H1 (cell line): ENCODE measurements at regions of chr1 and their contacts with region 1.

Region 1: GRCh38 chr1:7667625-7668218 is 103.4 kb upstream of the VAMP3 start:
- DNase-seq: peak; percentile 53 to 99
- H3K4me3 ChIP-seq: no peak overlapping the region
- H3K27ac ChIP-seq: no peak overlapping the region
- H3K4me1 ChIP-seq: peaks cover 0 to 23% (median 12%) of the 10 kb centered on the region in 4 experiments; a peak in 6 of 7 replicates
- H3K27me3 ChIP-seq: no peaks in the 10 kb centered on the region; a peak in 1 of 7 replicates
- CTCF ChIP-seq: peak; percentile 99 to 100 (median 100)
- EP300 ChIP-seq: no peak
- POLR2A ChIP-seq: no peak
- RAD21 ChIP-seq: peak; percentile 97 to 99

Region 2: GRCh38 chr1:7680207-7680954 is 12.7 kb after region 1 on chr1:
- CTCF ChIA-PET with region 1: interaction called, 106 read pairs
- POLR2A ChIA-PET with region 1: interaction called, 8 read pairs
- DNase-seq: peak in 1 of 2 experiments; percentile 63
- H3K4me3 ChIP-seq: peak overlapping the region; percentile 47 to 74 (median 54)
- H3K27ac ChIP-seq: no peak overlapping the region
- H3K4me1 ChIP-seq: peaks cover 0 to 3% (median 3%) of the 10 kb centered on the region in 4 experiments; a peak in 4 of 7 replicates
- H3K27me3 ChIP-seq: peaks cover 0 to 20% (median 14%) of the 10 kb centered on the region in 4 experiments; a peak in 6 of 7 replicates
- CTCF ChIP-seq: no peak
- EP300 ChIP-seq: no peak
- POLR2A ChIP-seq: peak in 1 of 2 experiments; percentile 10; a peak in 1 of 3 replicates
- RAD21 ChIP-seq: no peak

Region 3: DNA sequence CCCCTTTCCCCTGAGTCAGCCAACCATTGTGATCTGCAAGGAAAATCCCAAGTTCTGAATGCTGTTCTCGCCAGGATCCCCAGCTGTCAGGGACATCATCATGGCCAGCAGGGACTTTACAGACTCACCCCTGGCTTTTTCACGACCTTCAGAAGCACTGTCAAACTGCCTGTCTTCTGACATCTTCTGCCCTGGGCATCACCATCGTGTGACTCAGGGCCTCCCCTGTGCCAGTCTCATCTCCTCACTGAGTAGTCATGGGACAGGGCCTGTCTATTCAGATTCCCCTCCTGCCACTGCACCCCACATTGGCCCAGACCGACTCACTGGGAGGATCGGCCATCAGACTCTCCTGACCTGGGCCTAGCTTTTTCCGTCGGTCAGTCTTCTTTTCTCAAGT is 30.9 kb after region 1 on chr1:
- CTCF ChIA-PET with region 1: interaction called, 44 read pairs
- POLR2A ChIA-PET with region 1: interaction called, 6 read pairs
- DNase-seq: no peak
- H3K4me3 ChIP-seq: no peak overlapping the region
- H3K27ac ChIP-seq: no peak overlapping the region
- H3K4me1 ChIP-seq: peaks cover 2 to 14% (median 9%) of the 10 kb centered on the region in 4 experiments; a peak in 5 of 7 replicates
- H3K27me3 ChIP-seq: peaks cover 0 to 15% (median 12%) of the 10 kb centered on the region in 4 experiments; a peak in 5 of 7 replicates
- CTCF ChIP-seq: no peak
- EP300 ChIP-seq: no peak
- POLR2A ChIP-seq: no peak
- RAD21 ChIP-seq: no peak

Region 4: GRCh38 chr1:7719468-7720094 is 51.9 kb after region 1 on chr1:
- CTCF ChIA-PET with region 1: interaction called, 21 read pairs
- POLR2A ChIA-PET with region 1: no interaction called
- DNase-seq: no peak
- H3K4me3 ChIP-seq: no peak overlapping the region
- H3K27ac ChIP-seq: no peak overlapping the region
- H3K4me1 ChIP-seq: peaks cover 0 to 4% (median 0%) of the 10 kb centered on the region in 4 experiments; a peak in 1 of 7 replicates
- H3K27me3 ChIP-seq: peaks cover 0 to 9% (median 1%) of the 10 kb centered on the region in 4 experiments; a peak in 3 of 7 replicates
- CTCF ChIP-seq: no peak
- EP300 ChIP-seq: no peak
- POLR2A ChIP-seq: no peak
- RAD21 ChIP-seq: no peak

Region 5: DNA sequence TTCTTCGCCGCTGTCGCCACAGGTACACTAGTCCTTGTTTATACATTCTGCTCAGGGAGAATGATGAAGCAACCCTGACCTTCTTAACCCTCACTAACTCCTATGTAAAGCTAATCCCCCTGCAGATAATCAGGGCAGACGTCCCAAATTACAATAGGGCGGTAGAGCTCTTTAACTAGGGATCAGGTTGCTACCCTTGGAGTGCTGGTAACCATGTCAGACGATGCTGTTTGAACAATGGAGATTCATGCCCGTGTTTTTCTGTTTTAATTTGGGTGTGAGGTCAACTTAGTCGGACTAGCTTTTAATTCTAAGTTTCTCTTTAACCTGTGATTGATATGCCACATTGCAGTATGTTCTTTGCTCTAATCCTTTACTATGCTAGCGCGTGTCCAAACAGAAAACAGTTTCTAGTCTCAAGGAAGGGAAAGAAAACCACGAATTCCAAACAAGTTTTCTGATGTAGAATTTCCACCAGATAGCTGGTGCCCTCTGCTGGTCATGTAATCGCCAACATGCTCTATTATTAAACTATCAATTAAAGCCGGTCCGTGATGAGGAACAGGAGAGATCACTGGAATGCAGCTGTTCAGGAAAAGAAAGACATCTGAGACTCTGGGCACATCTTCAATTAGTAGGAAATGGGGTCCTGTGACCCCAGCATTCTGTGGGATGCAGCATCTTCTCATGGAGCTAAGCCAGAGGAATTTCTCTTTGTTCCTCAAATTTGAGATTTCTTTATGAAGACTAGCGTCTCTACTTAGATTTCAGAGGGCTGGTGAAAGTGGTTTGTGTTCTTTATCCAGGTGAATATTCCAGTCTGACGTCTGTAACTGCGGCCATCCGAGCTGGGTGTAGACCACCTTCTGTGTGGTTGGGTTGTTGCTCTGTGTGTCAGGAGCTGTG is 85.0 kb after region 1 on chr1:
- CTCF ChIA-PET with region 1: interaction called, 554 read pairs
- POLR2A ChIA-PET with region 1: interaction called, 36 read pairs
- DNase-seq: peak in 1 of 2 experiments; percentile 62
- H3K4me3 ChIP-seq: peak overlapping the region; percentile 22 to 53 (median 36); a peak in 7 of 8 replicates
- H3K27ac ChIP-seq: no peak overlapping the region
- H3K4me1 ChIP-seq: peaks cover 3 to 9% (median 6%) of the 10 kb centered on the region in 4 experiments; a peak in 6 of 7 replicates
- H3K27me3 ChIP-seq: no peaks in the 10 kb centered on the region
- CTCF ChIP-seq: peak in 2 of 3 experiments; percentile 75; a peak in 3 of 4 replicates
- EP300 ChIP-seq: no peak
- POLR2A ChIP-seq: no peak
- RAD21 ChIP-seq: peak; percentile 72 to 81

Region 6: DNA sequence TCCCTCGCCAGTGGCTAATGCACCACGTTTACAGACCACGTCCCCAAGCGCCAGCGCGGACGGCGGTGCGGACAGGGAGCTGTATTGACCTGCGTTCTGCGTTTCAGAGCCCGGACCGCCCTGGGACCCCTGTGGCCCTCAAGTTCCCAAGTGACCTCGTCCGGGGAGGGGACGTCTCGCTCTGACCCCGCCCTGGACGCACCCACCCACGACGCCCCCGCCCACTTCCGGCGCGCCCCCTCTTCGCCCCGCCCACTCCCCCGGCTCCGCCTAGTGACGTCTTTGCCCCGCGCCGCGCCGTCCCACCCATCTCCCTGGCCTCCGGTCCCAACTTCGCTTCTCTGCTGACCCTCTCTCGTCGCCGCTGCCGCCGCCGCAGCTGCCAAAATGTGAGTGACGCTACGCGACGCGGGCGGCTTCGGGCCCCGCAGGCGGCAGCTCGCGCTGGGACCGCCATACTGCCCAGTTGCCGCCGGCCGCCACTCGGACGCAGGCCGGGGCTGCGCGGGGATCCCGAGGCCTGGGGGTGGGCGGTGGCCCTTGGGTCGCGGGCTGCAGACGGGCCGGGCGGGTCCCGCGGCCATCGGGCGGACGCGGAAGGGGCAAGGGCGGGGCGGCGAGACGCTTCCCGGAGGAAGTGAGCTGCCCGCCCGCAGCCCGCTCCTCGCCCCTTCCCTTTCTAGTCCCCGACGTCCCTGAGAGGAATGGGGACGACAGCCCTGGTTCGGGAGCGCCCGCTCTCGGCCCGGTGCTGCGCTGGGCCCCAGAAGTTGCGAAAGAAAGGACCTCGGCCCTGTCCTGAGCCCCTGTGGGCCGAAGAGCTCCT is 103.5 kb after region 1 on chr1 and contains the start of gene VAMP3:
- CTCF ChIA-PET with region 1: interaction called, 16 read pairs
- POLR2A ChIA-PET with region 1: no interaction called
- DNase-seq: peak; percentile 56 to 97
- H3K4me3 ChIP-seq: peak within 1 kb of the TSS; percentile 83 to 99 (median 88)
- H3K27ac ChIP-seq: peak within 1 kb of the TSS; percentile 79
- H3K4me1 ChIP-seq: peaks cover 0 to 6% (median 2%) of the 10 kb centered on the region in 4 experiments; a peak in 5 of 7 replicates
- H3K27me3 ChIP-seq: no peaks in the 10 kb centered on the region; a peak in 1 of 7 replicates
- CTCF ChIP-seq: no peak
- EP300 ChIP-seq: no peak
- POLR2A ChIP-seq: no peak
- RAD21 ChIP-seq: no peak
- total RNA-seq, gene VAMP3: 36.7 and 41.2 TPM in 2 replicates

Region 7: DNA sequence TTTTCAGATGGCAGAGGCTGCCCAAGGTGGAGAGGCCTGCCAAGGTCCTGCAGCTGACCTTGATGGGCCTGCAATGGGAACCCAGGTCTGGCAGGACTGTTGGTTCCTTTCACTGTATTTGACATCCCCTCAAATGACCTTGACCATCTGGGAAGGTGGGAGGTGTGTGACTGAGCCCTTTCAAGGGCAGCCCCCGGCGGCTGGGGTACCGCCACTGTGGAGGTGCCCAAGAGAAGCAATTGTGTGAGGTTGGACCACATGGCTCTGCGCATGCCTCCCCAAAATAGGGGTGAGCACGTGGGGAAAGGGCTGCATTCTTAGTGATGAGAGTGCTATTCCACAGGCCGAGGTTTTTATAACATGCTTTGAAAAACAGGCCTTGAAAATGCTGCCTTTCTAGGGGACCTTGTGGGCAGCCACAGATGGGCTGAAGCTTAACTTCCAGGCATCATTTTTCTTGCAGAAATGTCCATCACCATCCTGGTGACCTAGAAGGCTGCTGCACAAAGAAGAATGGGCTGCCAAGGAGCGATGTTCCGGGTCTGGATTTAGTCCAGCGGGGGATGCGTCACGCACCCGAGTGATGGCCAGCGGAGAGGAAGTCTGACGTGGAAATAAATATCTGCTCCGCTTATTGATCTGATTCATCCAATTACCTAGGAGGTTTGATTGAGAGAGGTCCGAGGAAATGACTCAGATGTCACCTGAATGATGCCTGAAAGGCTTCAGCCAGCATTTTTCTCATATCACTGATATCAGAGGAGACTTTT is 201.6 kb after region 1 on chr1:
- CTCF ChIA-PET with region 1: no interaction called
- POLR2A ChIA-PET with region 1: no interaction called
- DNase-seq: no peak
- H3K4me3 ChIP-seq: no peak overlapping the region
- H3K27ac ChIP-seq: no peak overlapping the region
- H3K4me1 ChIP-seq: no peaks in the 10 kb centered on the region
- H3K27me3 ChIP-seq: no peaks in the 10 kb centered on the region
- CTCF ChIP-seq: no peak
- EP300 ChIP-seq: no peak
- POLR2A ChIP-seq: no peak
- RAD21 ChIP-seq: no peak